ENCODE measurements at regions of chr2 and their contacts with region 1.

Region 1: DNA sequence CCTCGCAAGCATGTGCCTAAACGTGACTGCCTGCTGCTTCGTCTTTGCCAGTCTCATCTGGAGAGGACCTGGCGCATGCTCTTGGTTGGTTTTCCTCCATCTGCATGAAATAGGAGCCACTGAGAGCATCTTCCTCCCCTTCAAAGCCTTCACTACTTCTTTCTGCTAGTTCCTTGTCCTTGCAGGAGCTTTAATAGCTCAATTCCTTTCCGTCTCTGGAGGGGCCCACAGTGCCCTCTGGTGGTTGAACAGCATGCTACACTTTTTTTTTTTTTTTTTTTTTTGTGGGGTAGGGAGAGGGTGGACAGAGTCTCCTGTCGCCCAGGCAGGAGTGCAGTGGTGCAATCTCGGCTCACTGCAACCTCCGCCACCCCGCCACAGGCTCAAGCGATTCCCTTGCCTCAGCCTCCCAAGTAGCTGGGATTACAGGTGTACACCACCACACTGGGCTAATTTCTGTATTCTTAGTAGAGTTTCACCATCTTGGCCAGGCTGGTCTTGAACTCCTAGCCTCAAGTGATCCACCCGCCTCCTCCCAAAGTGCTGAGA is 59.6 kb downstream of the SP110 start:
- DNase-seq: peak; percentile 55
- ATAC-seq: peak; percentile 79
- H3K4me3 Mint-ChIP-seq: no peak overlapping the region
- H3K27ac Mint-ChIP-seq: no peak overlapping the region
- H3K4me1 Mint-ChIP-seq: peaks cover 5% of the 10 kb centered on the region
- H3K27me3 Mint-ChIP-seq: no peaks in the 10 kb centered on the region; the same call in 1 of the 2 replicates
- CTCF ChIP-seq: peak; percentile 61

Region 2: GRCh38 chr2:229873123-229873581 is 287.0 kb before region 1 on chr2:
- CTCF ChIA-PET with region 1: no interaction called
- POLR2A ChIA-PET with region 1: no interaction called
- DNase-seq: no peak
- ATAC-seq: no peak
- H3K4me3 Mint-ChIP-seq: no peak overlapping the region
- H3K27ac Mint-ChIP-seq: peak overlapping the region; percentile 37; the same call in 1 of the 2 replicates
- H3K4me1 Mint-ChIP-seq: peaks cover 16% of the 10 kb centered on the region
- H3K27me3 Mint-ChIP-seq: no peaks in the 10 kb centered on the region
- CTCF ChIP-seq: no peak

Region 3: GRCh38 chr2:230007931-230008707 is 152.1 kb before region 1 on chr2:
- CTCF ChIA-PET with region 1: interaction called, 34 read pairs
- POLR2A ChIA-PET with region 1: interaction called, 3 read pairs
- DNase-seq: peak; percentile 82
- ATAC-seq: peak; percentile 70
- H3K4me3 Mint-ChIP-seq: no peak overlapping the region
- H3K27ac Mint-ChIP-seq: no peak overlapping the region
- H3K4me1 Mint-ChIP-seq: peaks cover 6% of the 10 kb centered on the region; the same call in 1 of the 2 replicates
- H3K27me3 Mint-ChIP-seq: no peaks in the 10 kb centered on the region
- CTCF ChIP-seq: peak; percentile 81

Region 4: GRCh38 chr2:230170532-230170931 is 10.3 kb after region 1 on chr2:
- CTCF ChIA-PET with region 1: interaction called, 12 read pairs
- POLR2A ChIA-PET with region 1: no interaction called
- DNase-seq: no peak
- ATAC-seq: no peak
- H3K4me3 Mint-ChIP-seq: no peak overlapping the region
- H3K27ac Mint-ChIP-seq: no peak overlapping the region
- H3K4me1 Mint-ChIP-seq: peaks cover 7% of the 10 kb centered on the region; the same call in 1 of the 2 replicates
- H3K27me3 Mint-ChIP-seq: no peaks in the 10 kb centered on the region
- CTCF ChIP-seq: no peak

Region 5: DNA sequence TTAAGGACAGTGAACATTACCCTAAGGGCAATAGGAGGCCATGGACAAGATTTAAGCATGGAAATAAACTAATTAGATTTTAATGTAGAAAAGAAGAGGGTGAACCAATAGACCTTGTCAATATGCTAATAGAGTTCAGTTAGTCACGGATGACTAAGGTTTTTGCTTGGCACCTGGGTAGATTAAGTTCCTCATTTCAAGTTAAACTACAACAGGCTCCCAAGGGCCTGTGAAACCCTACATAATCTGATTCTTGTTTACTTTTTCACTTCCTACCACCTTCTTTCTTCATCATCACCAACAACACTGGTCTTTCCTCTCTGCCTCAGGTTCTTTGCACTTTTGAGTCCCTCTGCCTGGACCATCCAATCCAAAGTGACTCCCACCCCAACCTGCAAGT is 44.8 kb after region 1 on chr2:
- CTCF ChIA-PET with region 1: no interaction called
- POLR2A ChIA-PET with region 1: no interaction called
- DNase-seq: no peak
- ATAC-seq: no peak
- H3K4me3 Mint-ChIP-seq: no peak overlapping the region
- H3K27ac Mint-ChIP-seq: no peak overlapping the region
- H3K4me1 Mint-ChIP-seq: no peaks in the 10 kb centered on the region
- H3K27me3 Mint-ChIP-seq: no peaks in the 10 kb centered on the region
- CTCF ChIP-seq: no peak

Region 6: DNA sequence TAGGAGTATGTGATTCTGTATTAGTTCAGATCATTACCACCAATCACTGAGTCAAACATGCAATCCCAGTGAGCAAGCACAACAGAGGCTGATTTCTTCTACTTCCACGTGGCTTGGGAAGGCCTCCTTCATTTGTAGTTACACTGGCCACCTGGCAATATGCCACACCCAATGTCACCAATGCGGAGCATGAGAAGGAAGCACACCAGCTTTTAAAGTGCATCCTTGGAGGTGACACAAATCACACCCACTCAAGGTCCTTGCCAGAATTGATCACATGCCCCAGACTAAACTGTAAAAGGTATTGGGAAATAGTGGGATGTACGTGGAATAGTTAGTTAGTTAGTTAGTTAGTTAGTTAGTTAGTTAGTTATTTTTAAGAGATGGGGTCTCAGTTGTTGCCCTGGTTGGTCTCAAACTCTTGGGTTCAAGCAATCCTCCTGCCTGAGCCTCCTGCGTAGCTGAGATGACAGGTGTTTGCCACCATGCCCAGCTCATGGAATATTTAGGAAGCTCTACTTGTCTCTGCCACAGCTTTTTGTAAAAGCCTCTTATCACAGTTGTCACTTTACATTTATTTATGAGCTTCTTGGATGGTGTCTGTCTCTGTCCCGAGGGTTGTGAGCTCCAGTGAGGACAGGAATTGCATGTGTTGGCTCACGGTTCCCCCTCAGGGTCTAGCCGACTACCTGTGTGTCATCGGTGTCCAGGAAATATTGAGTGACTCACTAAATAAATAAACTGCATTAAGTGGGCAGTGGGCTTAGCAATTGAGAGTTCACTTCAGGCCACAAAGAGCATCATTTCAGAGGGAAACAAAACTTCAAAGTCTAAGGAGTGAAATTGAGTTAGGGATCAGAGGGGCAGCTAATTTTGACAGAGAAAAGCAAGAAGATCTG is 524.3 kb after region 1 on chr2:
- CTCF ChIA-PET with region 1: no interaction called
- POLR2A ChIA-PET with region 1: no interaction called
- DNase-seq: no peak
- ATAC-seq: no peak
- H3K4me3 Mint-ChIP-seq: no peak overlapping the region
- H3K27ac Mint-ChIP-seq: no peak overlapping the region
- H3K4me1 Mint-ChIP-seq: peaks cover 4% of the 10 kb centered on the region; the same call in 1 of the 2 replicates
- H3K27me3 Mint-ChIP-seq: peaks cover 4% of the 10 kb centered on the region; the same call in 1 of the 2 replicates
- CTCF ChIP-seq: no peak